ENCODE measurements at regions of chr4 and their contacts with region 1.

Region 1: GRCh38 chr4:139301113-139301820 is at the start of gene NAA15:
- DNase-seq: peak; percentile 95 to 99 (median 96)
- ATAC-seq: peak; percentile 86
- H3K4me3 ChIP-seq: peak within 1 kb of the TSS; percentile 91
- H3K4me3 Mint-ChIP-seq: peak within 1 kb of the TSS; percentile 95
- H3K27ac ChIP-seq: peak within 1 kb of the TSS; percentile 97 to 98
- H3K27ac Mint-ChIP-seq: peak within 1 kb of the TSS; percentile 94
- H3K4me1 ChIP-seq: peaks cover 26% of the 10 kb centered on the region
- H3K4me1 Mint-ChIP-seq: peaks cover 67% of the 10 kb centered on the region
- H3K27me3 ChIP-seq: no peaks in the 10 kb centered on the region
- H3K27me3 Mint-ChIP-seq: no peaks in the 10 kb centered on the region
- CTCF ChIP-seq: no peak
- total RNA-seq, gene NAA15: 54.2 to 57.1 TPM

Region 2: GRCh38 chr4:139015269-139015947 is 285.9 kb before region 1 on chr4 and contains the start of gene NOCT:
- CTCF ChIA-PET with region 1: interaction called, 6 read pairs
- POLR2A ChIA-PET with region 1: interaction called, 8 read pairs
- intact Hi-C with region 1: loop called (anchors 5 kb)
- DNase-seq: peak; percentile 75 to 98 (median 86)
- ATAC-seq: peak; percentile 90
- H3K4me3 ChIP-seq: peak within 1 kb of the TSS; percentile 74
- H3K4me3 Mint-ChIP-seq: peak within 1 kb of the TSS; percentile 93
- H3K27ac ChIP-seq: peak within 1 kb of the TSS; percentile 78 to 87
- H3K27ac Mint-ChIP-seq: peak within 1 kb of the TSS; percentile 95
- H3K4me1 ChIP-seq: peaks cover 20% of the 10 kb centered on the region
- H3K4me1 Mint-ChIP-seq: peaks cover 26% of the 10 kb centered on the region
- H3K27me3 ChIP-seq: no peaks in the 10 kb centered on the region
- H3K27me3 Mint-ChIP-seq: no peaks in the 10 kb centered on the region
- CTCF ChIP-seq: no peak
- total RNA-seq, gene NOCT: 13.7 to 15.8 TPM

Region 3: GRCh38 chr4:139083956-139084803 is 217.1 kb before region 1 on chr4:
- CTCF ChIA-PET with region 1: interaction called, 6 read pairs
- POLR2A ChIA-PET with region 1: interaction called, 61 read pairs
- intact Hi-C with region 1: loop called in 1 of 2 experiments (anchors 5 kb)
- DNase-seq: peak; percentile 65 to 94 (median 80)
- ATAC-seq: peak; percentile 44
- H3K4me3 ChIP-seq: peak overlapping the region; percentile 93
- H3K4me3 Mint-ChIP-seq: peak overlapping the region; percentile 93
- H3K27ac ChIP-seq: peak overlapping the region; percentile 94 to 96
- H3K27ac Mint-ChIP-seq: peak overlapping the region; percentile 92
- H3K4me1 ChIP-seq: peaks cover 5% of the 10 kb centered on the region
- H3K4me1 Mint-ChIP-seq: peaks cover 55% of the 10 kb centered on the region
- H3K27me3 ChIP-seq: no peaks in the 10 kb centered on the region
- H3K27me3 Mint-ChIP-seq: no peaks in the 10 kb centered on the region
- CTCF ChIP-seq: no peak

Region 4: DNA sequence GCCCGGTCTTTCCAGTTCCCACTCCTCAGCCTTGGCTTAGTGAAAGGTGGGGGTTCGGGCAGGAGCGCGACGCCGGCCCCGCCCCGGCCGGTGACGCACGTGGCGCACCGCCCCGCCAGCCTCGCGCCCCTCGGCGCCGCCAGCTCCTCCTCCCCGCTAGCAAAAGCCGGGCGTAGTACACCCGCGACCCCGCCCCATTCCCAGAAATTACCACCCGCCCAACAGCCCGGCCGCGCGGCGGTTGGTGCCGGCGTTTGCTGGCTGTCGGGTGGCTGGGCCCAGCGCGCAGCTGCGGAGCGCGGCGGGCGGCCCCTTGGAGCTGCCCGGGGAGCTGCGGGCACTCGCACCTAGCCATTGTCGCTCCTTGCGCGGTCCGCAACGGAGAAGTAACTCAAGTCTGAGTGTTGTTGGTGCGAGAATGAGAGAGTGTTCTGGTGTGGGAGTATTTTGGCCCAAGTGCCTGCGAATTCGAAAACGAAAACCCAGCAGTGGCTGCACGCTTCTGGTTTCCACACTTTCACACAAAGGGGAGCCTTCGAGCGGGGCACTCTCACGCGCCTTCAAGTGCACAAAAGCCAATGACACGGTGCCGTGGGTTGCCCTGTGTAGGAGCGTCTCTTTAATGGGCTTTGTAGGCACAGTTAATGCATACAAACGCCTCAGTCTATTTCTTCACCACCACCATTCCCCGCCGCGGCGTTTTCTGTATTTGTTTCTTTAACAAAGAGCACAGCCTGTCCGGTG is 123.2 kb before region 1 on chr4:
- CTCF ChIA-PET with region 1: interaction called, 7 read pairs
- POLR2A ChIA-PET with region 1: interaction called, 57 read pairs
- intact Hi-C with region 1: loop called in 1 of 2 experiments (anchors 2 kb)
- DNase-seq: peak; percentile 80 to 96 (median 90)
- ATAC-seq: peak; percentile 74
- H3K4me3 ChIP-seq: peak overlapping the region; percentile 85
- H3K4me3 Mint-ChIP-seq: peak overlapping the region; percentile 96
- H3K27ac ChIP-seq: peak overlapping the region; percentile 77 to 88
- H3K27ac Mint-ChIP-seq: peak overlapping the region; percentile 93
- H3K4me1 ChIP-seq: peaks cover 18% of the 10 kb centered on the region
- H3K4me1 Mint-ChIP-seq: peaks cover 26% of the 10 kb centered on the region
- H3K27me3 ChIP-seq: no peaks in the 10 kb centered on the region
- H3K27me3 Mint-ChIP-seq: no peaks in the 10 kb centered on the region
- CTCF ChIP-seq: no peak

Region 5: DNA sequence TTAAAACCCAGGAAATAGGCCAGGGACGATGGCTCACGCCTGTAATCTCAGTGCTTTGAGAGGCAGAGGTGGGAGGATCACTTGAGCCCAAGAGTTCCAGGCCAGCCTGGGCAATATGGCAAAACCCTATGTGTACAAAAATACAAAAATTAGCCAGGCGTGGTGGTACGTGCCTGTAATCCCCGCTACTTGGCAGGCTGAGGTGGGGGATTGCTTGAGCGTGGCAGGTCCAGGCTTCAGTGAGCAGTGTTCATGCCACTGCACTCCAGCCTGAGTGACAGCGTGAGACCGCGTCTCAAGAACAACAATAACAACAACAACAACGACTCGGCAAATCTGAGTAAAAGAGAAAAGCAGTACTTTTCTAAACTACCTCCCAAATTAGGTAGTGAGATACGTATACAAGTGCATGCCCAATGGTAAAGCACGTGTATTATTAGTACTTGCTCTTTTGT is 14.0 kb after region 1 on chr4:
- CTCF ChIA-PET with region 1: interaction called, 15 read pairs
- POLR2A ChIA-PET with region 1: interaction called, 27 read pairs
- intact Hi-C with region 1: loop called in 1 of 2 experiments (anchors 1 kb)
- DNase-seq: no peak
- ATAC-seq: no peak
- H3K4me3 ChIP-seq: no peak overlapping the region
- H3K4me3 Mint-ChIP-seq: peak overlapping the region; percentile 47
- H3K27ac ChIP-seq: peak overlapping the region in 1 of 2 donors; percentile 59
- H3K27ac Mint-ChIP-seq: peak overlapping the region; percentile 60
- H3K4me1 ChIP-seq: peaks cover 52% of the 10 kb centered on the region
- H3K4me1 Mint-ChIP-seq: peaks cover 81% of the 10 kb centered on the region
- H3K27me3 ChIP-seq: no peaks in the 10 kb centered on the region
- H3K27me3 Mint-ChIP-seq: no peaks in the 10 kb centered on the region
- CTCF ChIP-seq: no peak

Region 6: GRCh38 chr4:139337612-139338011 is 36.3 kb after region 1 on chr4:
- CTCF ChIA-PET with region 1: no interaction called
- POLR2A ChIA-PET with region 1: interaction called, 4 read pairs
- intact Hi-C with region 1: loop called in 1 of 2 experiments (anchors 5 kb)
- DNase-seq: no peak
- ATAC-seq: no peak
- H3K4me3 ChIP-seq: no peak overlapping the region
- H3K4me3 Mint-ChIP-seq: no peak overlapping the region
- H3K27ac ChIP-seq: no peak overlapping the region
- H3K27ac Mint-ChIP-seq: no peak overlapping the region
- H3K4me1 ChIP-seq: no peaks in the 10 kb centered on the region
- H3K4me1 Mint-ChIP-seq: peaks cover 14% of the 10 kb centered on the region
- H3K27me3 ChIP-seq: no peaks in the 10 kb centered on the region
- H3K27me3 Mint-ChIP-seq: no peaks in the 10 kb centered on the region
- CTCF ChIP-seq: no peak

Region 7: DNA sequence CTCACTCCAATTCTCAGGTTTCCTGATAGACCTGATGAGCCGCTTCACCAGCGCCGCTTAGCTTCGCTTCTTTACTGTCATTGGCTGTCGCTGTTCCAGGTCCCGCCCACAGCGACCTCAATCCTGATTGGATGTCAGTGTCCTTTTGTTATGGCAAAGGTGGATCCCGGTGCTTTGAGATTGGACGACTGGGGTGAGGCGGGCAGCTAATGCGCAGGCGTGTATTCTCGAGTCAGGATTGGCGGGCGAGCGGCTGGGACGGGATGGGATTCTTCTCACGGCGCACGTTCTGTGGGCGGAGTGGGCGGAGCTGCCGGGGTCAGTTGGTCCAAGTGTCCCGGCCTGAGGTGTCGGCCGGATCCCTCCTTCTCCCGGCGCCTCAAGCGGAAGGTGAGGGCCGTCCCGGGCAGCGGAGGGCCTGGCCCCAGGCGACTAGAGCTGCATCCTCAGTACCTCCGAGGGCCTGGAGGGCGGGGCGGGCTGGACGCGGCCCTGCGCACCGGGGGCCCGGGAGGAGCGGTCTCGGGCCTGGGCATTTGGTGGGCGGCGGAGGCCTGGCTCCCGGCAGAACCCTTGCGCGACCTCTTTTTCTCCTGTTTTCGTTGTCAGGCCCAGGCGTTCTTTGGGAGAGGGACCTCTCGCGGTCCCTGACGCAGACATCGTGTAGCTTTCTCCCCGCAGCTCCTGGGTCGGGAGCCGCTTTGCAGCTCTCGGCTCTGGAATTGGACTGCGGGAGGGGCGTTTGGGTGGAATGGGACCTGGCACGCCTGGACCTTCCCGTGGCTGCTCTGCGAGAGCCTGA is 1072.3 kb after region 1 on chr4 and contains the start of gene SCOC:
- CTCF ChIA-PET with region 1: no interaction called
- POLR2A ChIA-PET with region 1: no interaction called
- intact Hi-C with region 1: loop called in 1 of 2 experiments (anchors 10 kb)
- DNase-seq: peak; percentile 90 to 98 (median 94)
- ATAC-seq: peak; percentile 95
- H3K4me3 ChIP-seq: peak within 1 kb of the TSS; percentile 94
- H3K4me3 Mint-ChIP-seq: peak within 1 kb of the TSS; percentile 87
- H3K27ac ChIP-seq: peak within 1 kb of the TSS; percentile 65 to 83
- H3K27ac Mint-ChIP-seq: no peak within 1 kb of the TSS
- H3K4me1 ChIP-seq: peaks cover 14% of the 10 kb centered on the region
- H3K4me1 Mint-ChIP-seq: peaks cover 32% of the 10 kb centered on the region
- H3K27me3 ChIP-seq: no peaks in the 10 kb centered on the region
- H3K27me3 Mint-ChIP-seq: no peaks in the 10 kb centered on the region
- CTCF ChIP-seq: no peak
- total RNA-seq, gene SCOC: 5.9 to 6.8 TPM